Gastrocnemius medialis (tissue), 4 donors: ENCODE measurements at regions of chr7 and their contacts with region 1.

Region 1: DNA sequence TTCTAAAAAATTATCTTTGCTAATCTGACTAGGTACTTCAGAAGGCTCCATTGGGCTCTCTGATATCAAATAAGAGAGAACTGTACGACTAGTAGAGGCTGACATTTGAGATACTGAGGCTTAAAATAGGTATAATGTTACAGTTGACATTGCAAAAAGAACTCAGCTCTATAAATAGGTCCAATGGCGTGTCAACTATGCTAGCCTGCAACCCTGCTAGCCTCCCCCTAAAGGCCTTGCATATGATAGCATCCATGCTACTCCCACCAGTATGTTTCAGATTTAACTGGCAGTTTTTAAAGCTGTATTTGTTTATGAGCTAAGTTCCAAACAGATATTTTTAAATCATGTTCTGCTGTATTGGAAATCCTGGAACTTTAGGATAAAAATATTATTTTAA is at the start of gene PPP1R3A:
- DNase-seq: peak; percentile 49 to 79
- ATAC-seq: peak; percentile 95 to 97
- H3K4me3 ChIP-seq: peak within 1 kb of the TSS; percentile 49 to 67 (median 63)
- H3K27ac ChIP-seq: peak within 1 kb of the TSS; percentile 87 to 90 (median 89)
- H3K4me1 ChIP-seq: peaks cover 6 to 13% of the 10 kb centered on the region in 2 donors
- H3K27me3 ChIP-seq: no peaks in the 10 kb centered on the region
- CTCF ChIP-seq: peak; percentile 33 to 79 (median 57)
- POLR2A ChIP-seq: peak in 1 of 2 donors; percentile 60
- total RNA-seq, gene PPP1R3A: 21.6 to 57.6 (median 47.4) TPM

Region 2: GRCh38 chr7:113710310-113711106 is 208.4 kb before region 1 on chr7:
- in situ Hi-C with region 1: no loop called
- intact Hi-C with region 1: loop called (anchors 10 kb)
- DNase-seq: peak in 1 of 2 donors; percentile 14
- ATAC-seq: peak; percentile 47 to 74
- H3K4me3 ChIP-seq: no peak overlapping the region
- H3K27ac ChIP-seq: no peak overlapping the region
- H3K4me1 ChIP-seq: peaks cover 6 to 15% of the 10 kb centered on the region in 2 donors
- H3K27me3 ChIP-seq: no peaks in the 10 kb centered on the region
- CTCF ChIP-seq: peak; percentile 61 to 86 (median 65)
- POLR2A ChIP-seq: no peak

Region 3: GRCh38 chr7:113774182-113774807 is 144.7 kb before region 1 on chr7:
- in situ Hi-C with region 1: no loop called
- intact Hi-C with region 1: loop called (anchors 5 kb)
- DNase-seq: peak; percentile 34 to 49
- ATAC-seq: peak; percentile 100
- H3K4me3 ChIP-seq: peak overlapping the region in 2 of 4 donors; percentile 6 to 18
- H3K27ac ChIP-seq: peak overlapping the region; percentile 72 to 82 (median 74)
- H3K4me1 ChIP-seq: peaks cover 8 to 20% of the 10 kb centered on the region in 2 donors
- H3K27me3 ChIP-seq: no peaks in the 10 kb centered on the region
- CTCF ChIP-seq: peak; percentile 63 to 74 (median 67)
- POLR2A ChIP-seq: no peak

Region 4: DNA sequence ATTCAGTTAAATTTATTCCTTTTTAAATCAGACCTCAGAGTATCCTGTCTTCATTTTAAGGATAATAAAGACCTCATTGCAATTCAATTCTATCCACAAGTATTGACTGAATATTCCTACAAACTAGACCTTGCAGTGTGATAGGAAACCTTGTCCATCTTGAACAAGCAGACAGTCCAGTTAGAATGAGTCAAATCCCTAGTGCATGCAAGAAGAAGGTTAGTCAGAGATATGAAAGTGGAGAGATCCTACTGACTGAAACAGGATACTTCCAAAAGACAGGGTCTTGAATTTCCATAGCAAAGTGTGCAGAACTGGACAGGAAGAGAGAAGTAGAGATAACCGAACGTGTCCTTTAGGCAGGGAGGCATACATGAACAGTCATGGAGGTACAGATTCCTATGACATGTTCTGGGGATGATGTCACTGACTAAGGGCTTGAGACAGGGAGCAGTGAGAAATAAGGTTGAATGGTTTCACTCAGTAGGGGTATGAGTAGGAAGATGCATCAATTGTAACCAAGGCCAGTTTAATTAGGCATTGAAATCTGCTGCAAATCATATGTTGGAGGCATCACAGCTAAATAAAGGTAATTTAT is 45.3 kb before region 1 on chr7:
- in situ Hi-C with region 1: no loop called
- intact Hi-C with region 1: loop called (anchors 2 kb)
- DNase-seq: no peak
- ATAC-seq: peak; percentile 90 to 92
- H3K4me3 ChIP-seq: peak overlapping the region; percentile 27 to 44 (median 35)
- H3K27ac ChIP-seq: peak overlapping the region; percentile 77 to 88 (median 85)
- H3K4me1 ChIP-seq: peaks cover 10 to 44% of the 10 kb centered on the region in 2 donors
- H3K27me3 ChIP-seq: no peaks in the 10 kb centered on the region
- CTCF ChIP-seq: no peak
- POLR2A ChIP-seq: no peak

Region 5: DNA sequence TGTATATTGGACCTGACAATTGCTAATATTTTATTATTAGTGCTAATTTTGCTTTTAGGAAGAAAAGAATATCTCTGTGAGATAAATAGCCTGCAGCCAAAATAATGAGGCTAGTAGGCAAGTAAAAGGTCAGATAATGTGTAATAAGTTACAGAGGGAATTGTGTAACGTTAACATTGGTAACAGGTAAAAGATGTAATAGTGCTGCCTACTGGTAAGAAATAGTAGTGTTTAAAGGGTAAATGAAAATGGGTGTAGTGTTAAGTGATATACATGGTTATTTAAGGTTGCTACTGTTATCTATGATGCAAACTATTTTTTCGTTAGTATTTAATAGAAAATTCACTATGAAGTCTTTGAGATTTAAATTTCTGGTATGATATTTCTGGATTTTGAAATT is 486.5 kb after region 1 on chr7:
- in situ Hi-C with region 1: loop called in 1 of 4 experiments (anchors 25 kb)
- intact Hi-C with region 1: loop called (anchors 10 kb)
- DNase-seq: no peak
- ATAC-seq: peak; percentile 50 to 90
- H3K4me3 ChIP-seq: no peak overlapping the region
- H3K27ac ChIP-seq: no peak overlapping the region
- H3K4me1 ChIP-seq: no peaks in the 10 kb centered on the region
- H3K27me3 ChIP-seq: no peaks in the 10 kb centered on the region
- CTCF ChIP-seq: peak; percentile 25 to 83 (median 44)
- POLR2A ChIP-seq: no peak

Region 6: GRCh38 chr7:114414156-114415063 is 495.5 kb after region 1 on chr7 and contains the start of gene FOXP2:
- in situ Hi-C with region 1: loop called in 1 of 4 experiments (anchors 25 kb)
- intact Hi-C with region 1: loop called (anchors 10 kb)
- DNase-seq: no peak
- ATAC-seq: peak in 1 of 2 donors; percentile 15
- H3K4me3 ChIP-seq: peak within 1 kb of the TSS; percentile 44 to 50 (median 45)
- H3K27ac ChIP-seq: peak within 1 kb of the TSS; percentile 74 to 84 (median 75)
- H3K4me1 ChIP-seq: peaks cover 47 to 54% of the 10 kb centered on the region in 2 donors
- H3K27me3 ChIP-seq: no peaks in the 10 kb centered on the region
- CTCF ChIP-seq: no peak
- POLR2A ChIP-seq: no peak
- total RNA-seq, gene FOXP2: 4.9 to 16.9 (median 7.5) TPM